CD4-positive, alpha-beta memory T cell (primary cell): ENCODE measurements at regions of chr19 and their contacts with region 1.

Region 1: DNA sequence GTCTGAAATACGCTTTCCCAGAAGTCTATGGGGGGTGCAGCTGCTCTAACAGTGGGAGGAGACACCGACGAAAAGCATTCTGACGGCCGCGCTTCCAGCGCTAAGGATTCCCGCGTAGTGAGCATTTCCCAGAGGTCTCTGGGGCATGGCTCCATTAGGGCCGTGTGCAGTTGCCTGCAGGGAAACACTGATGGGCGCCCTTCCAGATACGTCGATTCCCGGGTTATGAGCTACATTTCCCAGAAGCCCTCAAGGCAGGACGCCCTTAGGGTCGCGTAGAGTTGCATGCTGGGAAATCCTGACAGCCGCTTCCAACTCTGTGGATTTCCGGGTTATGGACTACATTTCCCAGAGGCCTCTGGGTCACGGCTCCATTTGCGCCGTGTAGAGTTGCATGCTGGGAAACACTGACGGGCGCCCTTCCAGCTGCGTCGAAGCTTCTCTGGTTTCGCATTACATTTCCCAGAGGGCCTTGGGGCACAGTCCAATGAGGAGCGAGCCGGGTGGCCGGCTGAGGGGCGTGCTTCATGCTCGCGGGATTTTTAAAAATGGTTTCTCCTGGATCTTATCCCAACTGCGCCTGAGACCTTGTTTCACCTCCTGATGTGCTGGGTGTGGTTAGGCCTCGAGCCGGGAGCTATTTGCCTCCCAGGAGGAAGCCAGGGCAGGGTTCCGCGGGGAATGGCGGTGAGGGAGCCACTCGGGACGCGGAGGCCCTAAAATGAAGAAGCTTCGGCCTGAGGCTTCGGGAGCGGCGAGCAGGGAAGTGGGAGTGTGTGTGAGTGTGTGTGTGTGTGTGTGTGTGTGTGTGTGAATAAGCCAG is 17.2 kb upstream of the ZNF331 start:
- DNase-seq: peak; percentile 84 to 93 (median 91)
- H3K4me3 ChIP-seq: peak overlapping the region; percentile 53 to 79
- H3K4me3 Mint-ChIP-seq: peak overlapping the region; percentile 90 to 100 (median 98)
- H3K27ac ChIP-seq: peak overlapping the region; percentile 58
- H3K27ac Mint-ChIP-seq: peak overlapping the region; percentile 90 to 98 (median 93)
- H3K4me1 ChIP-seq: peaks cover 12% of the 10 kb centered on the region
- H3K4me1 Mint-ChIP-seq: peaks cover 15 to 21% (median 16%) of the 10 kb centered on the region in 4 donors
- H3K27me3 ChIP-seq: no peaks in the 10 kb centered on the region
- H3K27me3 Mint-ChIP-seq: no peaks in the 10 kb centered on the region

Region 2: DNA sequence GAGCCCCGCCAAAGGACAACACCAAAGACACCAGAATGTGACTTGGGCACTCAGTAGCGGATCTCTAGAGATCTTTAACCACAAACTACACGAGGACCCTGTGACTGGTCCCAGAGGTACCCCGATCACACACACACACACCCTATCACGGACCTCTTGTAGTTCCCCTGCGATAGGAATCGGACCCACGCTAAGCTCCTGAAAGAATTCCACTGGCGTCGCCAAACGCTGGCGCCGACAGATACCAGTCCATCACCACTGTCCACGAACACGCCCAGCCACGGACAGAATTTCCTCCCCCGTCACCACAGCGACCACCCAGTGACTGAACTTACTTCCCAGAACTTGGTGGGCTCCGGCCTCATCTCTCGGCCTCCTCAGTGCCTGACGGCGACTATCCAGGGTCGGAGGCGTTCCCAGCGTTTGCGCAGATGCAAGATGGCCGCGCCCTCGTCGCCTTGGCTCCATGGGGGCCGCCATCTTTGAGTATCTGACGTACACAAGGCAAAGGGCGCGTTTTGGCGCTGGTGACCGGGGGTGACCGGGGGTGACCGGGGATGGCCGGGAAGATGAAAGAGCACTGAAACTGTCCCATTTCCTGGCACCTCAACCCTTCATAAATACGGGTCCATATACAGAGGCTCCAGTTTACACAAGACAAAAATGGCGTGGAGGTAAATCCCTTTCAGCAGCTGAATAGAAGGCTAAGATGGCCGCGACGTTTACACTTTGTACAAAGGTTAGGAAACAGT is 1512.8 kb before region 1 on chr19 and contains the start of gene ZNF615:
- CTCF ChIA-PET with region 1: no interaction called
- POLR2A ChIA-PET with region 1: no interaction called
- intact Hi-C with region 1: loop called (anchors 5 kb)
- DNase-seq: peak; percentile 83 to 92 (median 85)
- H3K4me3 ChIP-seq: peak within 1 kb of the TSS; percentile 67 to 85
- H3K4me3 Mint-ChIP-seq: peak within 1 kb of the TSS; percentile 94 to 98 (median 98)
- H3K27ac ChIP-seq: peak within 1 kb of the TSS; percentile 78
- H3K27ac Mint-ChIP-seq: peak within 1 kb of the TSS; percentile 86 to 99 (median 98)
- H3K4me1 ChIP-seq: peaks cover 8% of the 10 kb centered on the region
- H3K4me1 Mint-ChIP-seq: peaks cover 14 to 17% (median 16%) of the 10 kb centered on the region in 4 donors
- H3K27me3 ChIP-seq: no peaks in the 10 kb centered on the region
- H3K27me3 Mint-ChIP-seq: no peaks in the 10 kb centered on the region
- total RNA-seq, gene ZNF615: 21.5 to 22.4 TPM

Region 3: GRCh38 chr19:53431399-53432087 is 89.2 kb before region 1 on chr19 and contains the start of gene ZNF761:
- CTCF ChIA-PET with region 1: no interaction called
- POLR2A ChIA-PET with region 1: no interaction called
- intact Hi-C with region 1: loop called (anchors 2 kb)
- DNase-seq: peak; percentile 95 to 99 (median 97)
- H3K4me3 ChIP-seq: peak within 1 kb of the TSS; percentile 77 to 80
- H3K4me3 Mint-ChIP-seq: peak within 1 kb of the TSS; percentile 97 to 100 (median 98)
- H3K27ac ChIP-seq: peak within 1 kb of the TSS; percentile 68
- H3K27ac Mint-ChIP-seq: peak within 1 kb of the TSS; percentile 92 to 99 (median 97)
- H3K4me1 ChIP-seq: peaks cover 15% of the 10 kb centered on the region
- H3K4me1 Mint-ChIP-seq: peaks cover 17 to 45% (median 30%) of the 10 kb centered on the region in 4 donors
- H3K27me3 ChIP-seq: no peaks in the 10 kb centered on the region
- H3K27me3 Mint-ChIP-seq: no peaks in the 10 kb centered on the region
- total RNA-seq, gene ZNF761: 18.3 to 20.2 TPM

Region 4: DNA sequence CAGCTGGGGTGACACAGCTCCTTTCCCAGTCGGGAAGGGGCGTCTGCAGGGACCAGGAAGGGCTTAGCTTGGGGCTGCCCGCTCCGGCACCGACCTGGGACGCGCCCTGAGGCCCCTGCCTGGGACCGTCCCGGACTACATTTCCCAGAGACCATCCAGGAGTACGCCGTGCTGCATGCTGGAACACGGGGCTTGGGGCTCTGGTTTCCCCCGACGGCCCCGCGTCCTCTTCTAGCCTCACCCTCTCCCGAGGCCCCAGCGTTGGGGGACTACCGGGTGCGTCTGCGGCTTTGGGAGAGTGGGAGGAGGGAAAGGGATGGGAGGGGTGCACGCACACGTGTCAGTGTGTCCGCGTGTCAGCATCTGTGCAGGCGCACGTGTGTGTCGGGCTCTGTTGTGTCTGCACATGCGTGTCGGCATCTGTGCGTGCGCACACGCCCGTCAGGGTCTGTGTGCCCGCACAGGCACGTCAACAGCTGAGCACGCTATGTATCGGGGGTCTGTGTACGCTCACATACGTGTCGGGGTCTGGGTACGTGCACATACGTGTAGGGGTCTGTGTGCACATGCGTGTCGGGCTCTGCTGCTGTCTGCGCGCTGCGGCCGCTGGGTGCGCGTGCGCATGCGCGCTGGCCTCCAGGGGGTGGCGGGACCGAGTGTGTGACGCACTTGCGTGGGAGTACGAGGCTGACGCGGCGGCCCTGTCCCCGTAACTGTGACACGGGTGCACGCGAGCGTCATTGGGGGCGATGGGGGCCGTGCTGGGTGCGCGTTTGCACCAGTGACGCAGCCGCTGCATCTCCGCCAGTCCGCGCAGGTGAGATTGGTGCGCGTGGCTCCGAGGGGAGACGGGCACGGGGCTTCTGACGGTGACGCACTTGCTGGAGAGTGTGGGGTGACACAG is 17.0 kb after region 1 on chr19 and contains the start of gene ZNF331:
- CTCF ChIA-PET with region 1: no interaction called
- POLR2A ChIA-PET with region 1: interaction called, 25 read pairs
- intact Hi-C with region 1: loop called (anchors 1 kb)
- DNase-seq: peak; percentile 93 to 97 (median 96)
- H3K4me3 ChIP-seq: peak within 1 kb of the TSS; percentile 31 to 83
- H3K4me3 Mint-ChIP-seq: peak within 1 kb of the TSS; percentile 94 to 99 (median 97)
- H3K27ac ChIP-seq: peak within 1 kb of the TSS; percentile 97
- H3K27ac Mint-ChIP-seq: peak within 1 kb of the TSS; percentile 95 to 100 (median 99)
- H3K4me1 ChIP-seq: peaks cover 17% of the 10 kb centered on the region
- H3K4me1 Mint-ChIP-seq: peaks cover 10 to 48% (median 22%) of the 10 kb centered on the region in 4 donors
- H3K27me3 ChIP-seq: no peaks in the 10 kb centered on the region
- H3K27me3 Mint-ChIP-seq: peaks cover 0 to 4% of the 10 kb centered on the region in 2 donors
- total RNA-seq, gene ZNF331: 56.5 to 58.3 TPM

Region 5: DNA sequence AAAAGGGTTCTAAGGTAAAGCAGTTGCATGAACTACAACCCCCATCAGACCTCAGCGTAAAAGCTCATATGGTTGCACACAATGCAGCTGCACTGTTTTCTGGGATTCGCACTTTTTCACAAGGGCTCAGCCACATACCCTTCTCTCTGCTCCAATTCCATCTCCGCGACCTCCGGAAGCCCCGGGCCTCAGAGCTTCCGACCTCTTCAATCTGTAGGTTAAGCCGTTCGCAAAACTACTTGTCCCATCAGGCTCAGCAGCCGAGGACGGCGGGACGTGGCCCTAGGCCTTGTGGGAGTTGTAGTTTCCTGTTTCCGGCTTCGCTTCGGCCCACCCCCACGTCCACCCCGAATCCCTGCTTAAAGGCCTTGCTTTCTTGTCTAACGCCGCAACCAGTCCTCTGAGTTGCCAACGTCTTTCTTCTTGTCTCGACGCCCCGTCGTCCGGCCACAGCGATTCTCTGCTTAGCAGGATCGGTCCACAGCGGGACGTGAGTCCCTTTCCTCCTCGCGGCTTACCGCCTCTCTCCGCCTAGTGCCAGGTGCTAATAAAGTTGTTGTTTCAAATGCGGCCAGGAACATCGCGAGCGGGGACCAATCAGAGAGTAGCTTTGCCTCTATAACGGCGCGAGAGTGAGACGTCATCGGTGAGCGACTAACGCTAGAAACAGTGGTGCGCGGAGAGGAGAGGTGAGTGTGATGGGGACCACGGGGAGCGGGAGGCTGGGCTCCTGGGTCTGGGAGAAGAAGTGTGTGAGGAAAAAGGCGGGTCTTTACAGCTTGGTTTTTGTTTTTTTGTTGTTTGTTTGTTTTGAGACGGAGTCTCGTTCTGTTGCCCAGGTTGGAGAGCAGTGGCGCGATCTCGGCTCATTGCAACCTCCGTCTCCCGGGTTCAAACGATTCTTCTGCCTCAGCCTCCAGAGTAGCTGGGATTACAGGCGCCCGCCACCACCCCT is 594.6 kb after region 1 on chr19 and contains the starts of genes PRPF31 and TFPT:
- CTCF ChIA-PET with region 1: no interaction called
- POLR2A ChIA-PET with region 1: no interaction called
- intact Hi-C with region 1: loop called (anchors 10 kb)
- DNase-seq: peak; percentile 97 to 98 (median 97)
- H3K4me3 ChIP-seq: peak within 1 kb of the TSS; percentile 80 to 81
- H3K4me3 Mint-ChIP-seq: peak within 1 kb of the TSS; percentile 86 to 99 (median 95)
- H3K27ac ChIP-seq: peak within 1 kb of the TSS; percentile 75
- H3K27ac Mint-ChIP-seq: peak within 1 kb of the TSS; percentile 91 to 97 (median 95)
- H3K4me1 ChIP-seq: peaks cover 27% of the 10 kb centered on the region
- H3K4me1 Mint-ChIP-seq: peaks cover 22 to 44% (median 28%) of the 10 kb centered on the region in 4 donors
- H3K27me3 ChIP-seq: no peaks in the 10 kb centered on the region
- H3K27me3 Mint-ChIP-seq: peaks cover 0 to 2% of the 10 kb centered on the region in 2 donors
- total RNA-seq, gene PRPF31: 77.6 to 80.0 TPM
- total RNA-seq, gene TFPT: 17.2 to 19.0 TPM